ENCODE measurements at regions of chr3 and their contacts with region 1.

Region 1: DNA sequence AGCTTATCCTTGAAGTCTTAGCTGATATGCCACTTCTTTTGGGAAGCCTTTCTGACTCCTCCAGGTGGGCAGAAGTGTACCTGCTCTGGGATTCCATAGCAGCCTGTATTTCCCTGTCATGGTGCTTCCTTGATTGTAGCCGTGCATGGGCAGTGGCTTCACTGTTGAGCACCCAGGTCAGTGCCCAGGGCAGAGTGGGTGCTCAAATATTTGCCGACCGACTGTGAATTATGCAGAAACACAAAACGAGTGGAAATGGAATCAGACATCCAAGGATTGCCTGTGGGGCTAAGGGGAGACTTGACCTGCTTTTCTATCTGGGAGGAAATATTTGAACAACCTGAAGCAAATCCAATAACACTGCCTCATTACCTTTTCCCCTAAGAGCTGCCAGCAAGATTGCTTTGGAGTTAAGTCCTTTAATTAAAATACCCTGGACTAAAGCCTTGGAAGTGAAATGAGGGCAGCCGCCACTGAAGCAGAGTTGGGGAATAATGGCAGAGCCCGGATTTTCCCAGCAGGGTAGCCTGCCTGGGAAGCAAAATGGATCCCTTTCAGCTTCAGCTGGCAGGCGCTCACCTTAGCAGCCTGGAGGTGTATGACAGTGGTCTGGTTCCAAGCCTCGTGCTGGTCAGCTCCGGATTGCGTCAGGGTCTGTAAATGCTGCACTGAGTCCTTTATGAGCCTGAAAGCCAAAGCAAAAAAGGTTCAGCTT is 14.9 kb downstream of the ACOX2 start:
- DNase-seq: no peak
- ATAC-seq: no peak
- H3K4me3 ChIP-seq: no peak overlapping the region
- H3K27ac ChIP-seq: peak overlapping the region; percentile 59
- H3K4me1 ChIP-seq: peaks cover 25% of the 10 kb centered on the region
- H3K27me3 ChIP-seq: no peaks in the 10 kb centered on the region
- CTCF ChIP-seq: no peak

Region 2: DNA sequence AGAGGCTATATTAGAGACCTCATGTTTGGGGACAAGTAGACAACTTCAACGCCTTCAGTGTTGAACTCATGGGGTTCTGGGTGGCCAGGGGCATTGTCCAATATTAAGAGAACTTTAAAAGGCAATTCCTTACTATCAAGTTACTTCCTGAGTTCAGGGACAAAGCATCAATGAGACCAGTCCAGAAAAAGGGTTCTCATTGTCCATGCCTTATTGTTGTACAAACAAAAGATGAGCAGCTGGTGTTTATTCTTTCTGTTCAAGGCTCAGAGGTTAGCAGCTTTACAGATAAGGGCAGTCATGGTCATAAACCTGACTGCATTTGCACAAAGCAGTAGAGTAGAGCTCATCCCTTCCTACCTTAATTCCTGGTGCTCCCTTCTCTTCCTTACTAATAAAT is 69.9 kb before region 1 on chr3:
- CTCF ChIA-PET with region 1: no interaction called
- POLR2A ChIA-PET with region 1: interaction called, 12 read pairs
- in situ Hi-C with region 1: no loop called
- intact Hi-C with region 1: no loop called
- DNase-seq: no peak
- ATAC-seq: no peak
- H3K4me3 ChIP-seq: no peak overlapping the region
- H3K27ac ChIP-seq: no peak overlapping the region
- H3K4me1 ChIP-seq: no peaks in the 10 kb centered on the region
- H3K27me3 ChIP-seq: no peaks in the 10 kb centered on the region
- CTCF ChIP-seq: no peak

Region 3: GRCh38 chr3:58568572-58569286 is 46.7 kb after region 1 on chr3:
- CTCF ChIA-PET with region 1: no interaction called
- POLR2A ChIA-PET with region 1: no interaction called
- in situ Hi-C with region 1: no loop called
- intact Hi-C with region 1: no loop called
- DNase-seq: no peak
- ATAC-seq: peak; percentile 62
- H3K4me3 ChIP-seq: no peak overlapping the region
- H3K27ac ChIP-seq: no peak overlapping the region
- H3K4me1 ChIP-seq: peaks cover 3% of the 10 kb centered on the region; the same call in 1 of the 2 replicates
- H3K27me3 ChIP-seq: no peaks in the 10 kb centered on the region
- CTCF ChIP-seq: peak; percentile 89

Region 4: GRCh38 chr3:58776231-58776630 is 254.2 kb after region 1 on chr3:
- CTCF ChIA-PET with region 1: no interaction called
- POLR2A ChIA-PET with region 1: no interaction called
- in situ Hi-C with region 1: no loop called
- intact Hi-C with region 1: no loop called
- DNase-seq: no peak
- ATAC-seq: no peak
- H3K4me3 ChIP-seq: no peak overlapping the region
- H3K27ac ChIP-seq: no peak overlapping the region
- H3K4me1 ChIP-seq: no peaks in the 10 kb centered on the region
- H3K27me3 ChIP-seq: no peaks in the 10 kb centered on the region
- CTCF ChIP-seq: peak; percentile 11; the same call in 1 of the 2 replicates